PC-9 (cell line): ENCODE measurements at regions of chr13 and their contacts with region 1.

Region 1: DNA sequence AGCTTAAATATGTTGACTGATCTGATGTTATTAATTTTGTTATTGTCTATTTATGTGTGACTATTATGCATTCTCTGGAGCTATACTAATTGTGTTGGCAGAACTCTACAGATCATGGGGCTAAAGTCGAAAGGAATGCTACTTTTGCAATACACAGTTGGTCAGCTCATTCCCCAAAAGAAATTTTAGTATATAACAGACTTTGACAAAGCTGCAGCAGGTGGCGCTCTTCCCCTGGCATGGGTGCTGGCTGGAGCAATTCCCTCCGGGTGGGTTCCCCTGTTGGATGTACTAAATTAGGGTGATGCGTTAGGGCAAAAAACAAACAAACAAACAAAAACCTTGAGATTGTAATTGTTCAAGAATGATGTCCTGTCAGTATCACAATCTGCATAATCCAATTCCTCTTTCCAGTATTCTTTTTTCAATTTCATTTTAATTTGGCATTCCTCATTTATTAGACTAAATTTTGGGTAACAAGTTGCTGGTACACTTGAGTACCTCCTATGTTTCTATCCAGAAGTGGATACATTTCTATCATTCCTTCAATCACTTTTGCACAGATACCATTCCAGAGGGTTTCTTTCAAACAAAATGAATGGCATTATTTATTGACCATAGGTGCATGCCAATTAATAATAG is 322.8 kb upstream of the EDNRB start:
- DNase-seq: peak in 1 of 2 experiments; percentile 13
- H3K4me3 ChIP-seq: no peak overlapping the region
- H3K27ac ChIP-seq: no peak overlapping the region
- H3K4me1 ChIP-seq: no peaks in the 10 kb centered on the region
- H3K27me3 ChIP-seq: no peaks in the 10 kb centered on the region
- CTCF ChIP-seq: peak; percentile 69

Region 2: DNA sequence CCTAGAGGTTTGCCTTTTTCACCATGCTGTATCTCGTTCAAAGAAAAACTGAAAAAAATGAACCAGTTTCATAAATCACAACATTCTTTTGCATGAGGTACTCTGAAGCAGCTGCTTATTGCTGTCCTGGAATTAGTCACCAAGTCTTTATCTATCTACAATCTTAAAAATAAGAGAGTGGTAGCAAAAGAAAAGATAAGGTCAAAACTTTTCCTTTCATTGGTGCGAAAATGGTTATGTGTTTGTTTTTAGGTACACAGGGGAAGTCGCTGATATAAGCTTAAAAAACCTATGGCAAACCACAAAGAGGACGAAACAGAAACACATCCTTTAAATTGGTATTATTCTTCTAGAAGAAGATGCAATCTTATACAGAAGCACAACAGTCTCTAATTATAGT is 396.8 kb after region 1 on chr13:
- CTCF ChIA-PET with region 1: no interaction called
- POLR2A ChIA-PET with region 1: no interaction called
- intact Hi-C with region 1: no loop called
- DNase-seq: no peak
- H3K4me3 ChIP-seq: no peak overlapping the region
- H3K27ac ChIP-seq: no peak overlapping the region
- H3K4me1 ChIP-seq: no peaks in the 10 kb centered on the region
- H3K27me3 ChIP-seq: no peaks in the 10 kb centered on the region
- CTCF ChIP-seq: no peak

Region 3: DNA sequence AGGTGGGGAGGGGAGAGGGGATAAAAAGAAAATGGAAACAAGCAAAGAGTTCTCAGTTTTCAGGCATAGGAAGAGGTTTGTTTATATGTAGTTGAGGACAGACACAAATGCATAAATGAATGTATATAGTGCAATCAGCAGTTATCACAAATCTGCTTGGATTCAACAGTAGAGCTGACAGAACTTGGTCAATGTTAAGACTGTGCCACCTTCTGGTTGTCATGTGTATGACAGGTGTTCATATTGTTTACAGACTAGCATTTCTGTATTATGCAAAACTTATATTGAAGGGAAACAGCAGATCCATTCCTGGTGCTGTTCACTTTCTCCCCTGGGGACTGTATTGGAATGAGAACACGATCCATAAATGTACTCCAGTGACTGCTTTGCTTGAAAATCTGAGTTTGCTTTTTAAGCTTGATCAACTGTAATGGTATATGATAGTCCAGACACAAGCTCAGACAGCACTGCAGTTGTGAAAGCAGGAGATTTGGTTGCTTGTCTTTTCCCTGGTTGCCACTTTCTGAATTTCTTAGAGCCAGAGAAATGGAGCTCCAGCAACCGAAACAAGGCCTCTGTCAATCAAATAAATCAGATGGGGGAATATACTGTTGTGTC is 737.1 kb after region 1 on chr13:
- CTCF ChIA-PET with region 1: interaction called, 8 read pairs
- POLR2A ChIA-PET with region 1: interaction called, 7 read pairs
- intact Hi-C with region 1: loop called (anchors 2 kb)
- DNase-seq: peak; percentile 9 to 37
- H3K4me3 ChIP-seq: no peak overlapping the region
- H3K27ac ChIP-seq: no peak overlapping the region
- H3K4me1 ChIP-seq: no peaks in the 10 kb centered on the region
- H3K27me3 ChIP-seq: no peaks in the 10 kb centered on the region
- CTCF ChIP-seq: peak; percentile 83